ENCODE measurements at regions of chr2 and their contacts with region 1.

Region 1: GRCh38 chr2:230614913-230615332 is 97.7 kb upstream of the CAB39 start:
- DNase-seq: no peak
- ATAC-seq: no peak
- H3K4me3 ChIP-seq: no peak overlapping the region
- H3K27ac ChIP-seq: no peak overlapping the region
- H3K4me1 ChIP-seq: no peaks in the 10 kb centered on the region
- H3K27me3 ChIP-seq: no peaks in the 10 kb centered on the region
- CTCF ChIP-seq: no peak
- POLR2A ChIP-seq: no peak

Region 2: GRCh38 chr2:229775614-229776313 is 839.2 kb before region 1 on chr2:
- in situ Hi-C with region 1: loop called in 2 of 4 experiments (anchors 10 to 25 kb)
- intact Hi-C with region 1: loop called (anchors 5 kb)
- DNase-seq: no peak
- ATAC-seq: no peak
- H3K4me3 ChIP-seq: no peak overlapping the region
- H3K27ac ChIP-seq: no peak overlapping the region
- H3K4me1 ChIP-seq: no peaks in the 10 kb centered on the region
- H3K27me3 ChIP-seq: no peaks in the 10 kb centered on the region
- CTCF ChIP-seq: no peak
- POLR2A ChIP-seq: no peak

Region 3: GRCh38 chr2:229780856-229781773 is 833.8 kb before region 1 on chr2:
- in situ Hi-C with region 1: loop called in 2 of 4 experiments (anchors 10 to 25 kb)
- intact Hi-C with region 1: loop called (anchors 5 kb)
- DNase-seq: no peak
- ATAC-seq: peak; percentile 57 to 75
- H3K4me3 ChIP-seq: no peak overlapping the region
- H3K27ac ChIP-seq: no peak overlapping the region
- H3K4me1 ChIP-seq: peaks cover 10 to 11% of the 10 kb centered on the region in 2 donors
- H3K27me3 ChIP-seq: no peaks in the 10 kb centered on the region
- CTCF ChIP-seq: peak; percentile 56 to 89 (median 69)
- POLR2A ChIP-seq: no peak

Region 4: DNA sequence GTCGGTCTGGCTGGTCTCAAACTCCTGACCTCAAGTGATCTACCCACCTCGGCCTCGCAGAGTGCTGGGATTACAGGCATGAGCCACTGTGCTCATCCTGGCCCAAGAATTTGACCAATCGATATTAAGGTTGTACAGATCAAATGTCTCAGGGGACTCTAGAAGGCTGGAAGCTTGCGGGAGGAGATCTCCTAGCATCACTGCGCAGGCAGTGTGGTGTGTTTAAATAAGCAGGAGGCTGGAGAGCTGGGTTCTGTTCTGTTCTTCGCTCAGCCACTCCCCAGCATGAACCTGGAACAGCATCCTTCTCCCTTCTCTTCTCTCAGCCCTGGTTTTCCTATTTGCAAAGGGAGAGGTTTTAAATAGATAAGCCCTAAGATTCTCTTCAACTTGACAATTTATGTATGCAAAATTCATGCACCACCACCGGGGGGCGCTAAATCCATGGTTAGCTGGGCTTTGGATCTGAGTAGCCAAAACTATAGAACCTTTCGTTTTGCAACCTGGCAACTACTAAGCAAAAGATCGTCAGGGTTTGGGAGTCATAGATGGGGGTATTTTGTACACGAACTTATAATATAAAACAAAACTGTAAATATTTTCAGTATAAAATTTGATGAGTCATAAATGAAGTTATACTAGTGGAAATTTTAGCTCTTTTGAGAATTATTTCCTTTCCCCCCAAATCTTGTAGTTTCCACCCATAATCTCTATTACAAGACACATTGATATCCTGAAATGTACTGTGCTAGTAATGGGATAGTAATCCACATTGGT is 606.8 kb before region 1 on chr2:
- in situ Hi-C with region 1: loop called in 3 of 4 experiments (anchors 5 to 25 kb)
- intact Hi-C with region 1: no loop called
- DNase-seq: peak; percentile 17 to 50
- ATAC-seq: peak; percentile 24 to 42
- H3K4me3 ChIP-seq: peak overlapping the region in 2 of 4 donors; percentile 15 to 22
- H3K27ac ChIP-seq: no peak overlapping the region
- H3K4me1 ChIP-seq: peaks cover 0 to 6% of the 10 kb centered on the region in 2 donors
- H3K27me3 ChIP-seq: no peaks in the 10 kb centered on the region
- CTCF ChIP-seq: peak; percentile 53 to 77 (median 65)
- POLR2A ChIP-seq: no peak

Region 5: DNA sequence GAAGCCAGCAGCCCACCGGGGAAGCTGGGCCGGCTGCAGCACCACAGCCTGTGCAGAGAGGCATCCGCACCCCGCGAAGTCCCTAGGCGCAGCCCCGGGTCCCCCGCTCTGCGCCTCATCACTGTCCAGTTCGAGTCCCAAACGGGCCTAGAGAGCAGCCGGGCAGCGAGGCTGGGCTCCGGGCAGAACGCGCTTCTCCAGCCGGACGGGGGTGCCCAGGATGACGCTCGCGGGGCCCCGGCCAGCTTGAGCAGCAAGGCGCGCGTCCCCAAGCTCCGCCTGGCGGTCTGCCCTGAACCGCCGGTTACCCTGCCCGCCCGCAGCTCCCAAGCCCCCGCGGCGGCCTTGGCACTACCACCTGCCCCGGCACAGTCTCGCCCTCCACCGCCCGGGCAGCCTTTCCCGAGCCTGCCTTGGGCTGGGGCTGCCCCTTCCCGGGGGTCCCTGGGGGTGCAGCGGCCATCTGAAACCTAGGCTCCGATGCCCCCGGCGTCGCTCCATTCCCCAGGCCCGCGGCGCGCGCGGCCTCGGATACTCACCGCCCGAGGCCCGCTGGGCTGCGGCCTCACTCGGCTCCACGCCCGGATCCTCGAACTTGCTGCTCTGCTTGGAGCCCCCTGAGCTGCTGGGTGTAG is 546.8 kb before region 1 on chr2:
- in situ Hi-C with region 1: no loop called
- intact Hi-C with region 1: loop called (anchors 5 kb)
- DNase-seq: no peak
- ATAC-seq: peak; percentile 30 to 31
- H3K4me3 ChIP-seq: peak overlapping the region; percentile 53 to 67 (median 62)
- H3K27ac ChIP-seq: peak overlapping the region; percentile 39 to 66 (median 52)
- H3K4me1 ChIP-seq: peaks cover 0 to 10% of the 10 kb centered on the region in 2 donors
- H3K27me3 ChIP-seq: peaks cover 0 to 7% (median 4%) of the 10 kb centered on the region in 3 donors
- CTCF ChIP-seq: no peak
- POLR2A ChIP-seq: no peak

Region 6: GRCh38 chr2:231017231-231017598 is 402.3 kb after region 1 on chr2:
- in situ Hi-C with region 1: no loop called
- intact Hi-C with region 1: no loop called
- DNase-seq: no peak
- ATAC-seq: no peak
- H3K4me3 ChIP-seq: no peak overlapping the region
- H3K27ac ChIP-seq: no peak overlapping the region
- H3K4me1 ChIP-seq: no peaks in the 10 kb centered on the region
- H3K27me3 ChIP-seq: no peaks in the 10 kb centered on the region
- CTCF ChIP-seq: no peak
- POLR2A ChIP-seq: no peak